ENCODE measurements at regions of chr1 and their contacts with region 1.

Region 1: DNA sequence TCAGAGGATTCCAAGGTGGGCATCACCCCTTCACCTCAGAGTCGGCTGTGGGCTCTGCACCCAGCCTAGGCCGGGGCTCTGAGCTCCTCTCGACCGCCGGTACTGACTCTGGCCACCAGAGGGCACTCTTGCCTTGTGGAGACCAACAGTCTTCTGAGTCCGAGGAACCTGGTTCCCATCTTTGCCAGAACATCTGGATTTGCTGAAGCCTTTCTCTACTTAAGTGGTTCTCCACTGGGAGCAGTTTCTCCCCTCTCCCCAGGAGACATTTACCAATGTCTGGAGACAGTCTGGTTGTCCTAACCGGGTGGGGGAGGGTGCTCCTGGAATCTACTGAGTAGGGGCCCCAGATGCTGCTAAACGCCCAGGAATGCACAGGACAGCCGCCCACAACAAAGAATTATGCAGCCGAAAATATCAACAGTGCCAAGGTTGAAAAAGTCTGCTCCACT is 9.4 kb downstream of the ETV3L start:
- DNase-seq: peak; percentile 93
- ATAC-seq: peak; percentile 92
- H3K4me3 Mint-ChIP-seq: no peak overlapping the region
- H3K27ac Mint-ChIP-seq: no peak overlapping the region
- H3K4me1 Mint-ChIP-seq: no peaks in the 10 kb centered on the region
- H3K27me3 Mint-ChIP-seq: peaks cover 5% of the 10 kb centered on the region
- CTCF ChIP-seq: peak; percentile 93

Region 2: DNA sequence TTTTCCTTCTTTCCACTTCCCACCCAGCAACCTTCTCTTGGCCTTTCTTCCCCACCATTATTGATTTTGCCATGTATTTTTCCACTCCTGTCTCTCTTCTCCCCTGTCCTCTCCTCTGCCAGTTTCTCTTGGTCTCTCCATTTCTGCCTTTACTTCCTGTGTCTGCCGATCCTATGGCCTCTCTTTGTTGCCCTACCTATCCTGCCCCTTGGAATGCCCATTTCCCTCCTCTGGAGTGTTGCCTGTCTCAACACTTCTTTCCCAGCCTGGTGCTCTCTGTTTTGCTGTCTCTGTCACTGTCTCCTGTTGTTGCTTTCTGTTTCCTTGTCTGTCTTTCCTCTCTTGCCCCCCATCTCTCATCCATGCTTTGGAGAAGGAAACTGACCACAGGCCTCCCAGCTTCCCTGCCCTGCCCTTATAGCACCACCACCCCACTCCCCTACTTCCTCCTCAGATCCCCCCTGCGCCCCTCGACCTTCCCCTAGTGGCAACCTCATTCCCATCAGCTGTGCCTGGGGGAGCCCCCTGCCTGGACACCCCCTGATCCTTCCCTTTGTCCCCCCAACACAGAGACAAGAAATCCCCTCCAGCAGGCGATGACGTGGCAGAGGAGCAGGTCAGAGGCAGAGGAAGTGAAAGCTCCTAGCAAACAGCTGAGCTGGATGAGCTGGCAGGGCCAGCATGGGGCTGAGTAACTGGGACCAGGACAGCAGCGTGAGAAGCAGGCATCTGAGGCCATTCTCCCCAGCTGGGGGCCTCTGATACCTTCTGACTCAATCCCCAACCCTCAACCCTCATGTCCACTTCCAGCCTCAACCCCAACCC is 16.0 kb after region 1 on chr1:
- CTCF ChIA-PET with region 1: interaction called, 20 read pairs
- POLR2A ChIA-PET with region 1: no interaction called
- intact Hi-C with region 1: no loop called
- DNase-seq: peak; percentile 72
- ATAC-seq: peak; percentile 93
- H3K4me3 Mint-ChIP-seq: no peak overlapping the region
- H3K27ac Mint-ChIP-seq: peak overlapping the region; percentile 2
- H3K4me1 Mint-ChIP-seq: peaks cover 9% of the 10 kb centered on the region
- H3K27me3 Mint-ChIP-seq: peaks cover 19% of the 10 kb centered on the region
- CTCF ChIP-seq: no peak

Region 3: GRCh38 chr1:157138220-157139051 is 48.2 kb after region 1 on chr1 and contains the start of gene ETV3:
- CTCF ChIA-PET with region 1: interaction called, 33 read pairs
- POLR2A ChIA-PET with region 1: no interaction called
- intact Hi-C with region 1: no loop called
- DNase-seq: peak; percentile 92
- ATAC-seq: peak; percentile 83
- H3K4me3 Mint-ChIP-seq: peak within 1 kb of the TSS; percentile 95
- H3K27ac Mint-ChIP-seq: peak within 1 kb of the TSS; percentile 90
- H3K4me1 Mint-ChIP-seq: peaks cover 65% of the 10 kb centered on the region
- H3K27me3 Mint-ChIP-seq: no peaks in the 10 kb centered on the region
- CTCF ChIP-seq: no peak
- total RNA-seq, gene ETV3: 47.7 to 47.9 TPM

Region 4: GRCh38 chr1:157163273-157164127 is 73.3 kb after region 1 on chr1:
- CTCF ChIA-PET with region 1: interaction called, 562 read pairs
- POLR2A ChIA-PET with region 1: no interaction called
- intact Hi-C with region 1: no loop called
- DNase-seq: peak; percentile 82
- ATAC-seq: peak; percentile 85
- H3K4me3 Mint-ChIP-seq: no peak overlapping the region
- H3K27ac Mint-ChIP-seq: no peak overlapping the region
- H3K4me1 Mint-ChIP-seq: no peaks in the 10 kb centered on the region
- H3K27me3 Mint-ChIP-seq: peaks cover 2% of the 10 kb centered on the region
- CTCF ChIP-seq: peak; percentile 91

Region 5: DNA sequence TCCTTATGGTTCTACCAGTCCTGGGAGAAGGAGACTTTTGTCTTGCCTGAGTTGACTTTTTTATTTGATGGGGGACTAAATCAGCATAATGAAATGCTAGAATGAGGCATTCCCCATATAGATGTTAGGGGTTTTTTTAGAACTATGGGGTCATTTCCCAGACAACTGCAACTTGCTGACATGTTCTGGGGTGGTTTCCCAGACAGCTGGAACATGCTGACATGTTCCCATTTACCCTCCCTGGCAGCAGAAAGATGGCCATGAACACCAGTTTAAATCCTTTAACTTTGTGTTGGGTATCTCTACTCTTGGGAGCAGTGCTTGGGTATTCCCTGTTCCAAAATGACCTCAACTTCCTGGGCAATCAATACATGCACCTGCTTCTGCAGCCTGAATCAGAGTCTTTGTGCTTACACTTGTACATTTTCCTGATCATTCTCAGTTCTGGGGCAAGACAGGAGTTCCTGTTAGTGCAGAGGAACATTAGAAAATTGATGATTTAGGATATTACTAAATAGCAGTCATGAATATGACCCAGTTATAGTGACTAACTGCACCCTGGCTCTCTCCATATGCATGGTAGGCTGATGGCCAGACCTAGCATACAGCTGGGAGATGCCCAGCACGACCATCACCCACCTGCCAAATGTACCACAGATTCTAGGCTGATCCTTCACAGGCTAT is 826.8 kb after region 1 on chr1:
- CTCF ChIA-PET with region 1: no interaction called
- POLR2A ChIA-PET with region 1: no interaction called
- intact Hi-C with region 1: no loop called
- DNase-seq: no peak
- ATAC-seq: no peak
- H3K4me3 Mint-ChIP-seq: no peak overlapping the region
- H3K27ac Mint-ChIP-seq: no peak overlapping the region
- H3K4me1 Mint-ChIP-seq: no peaks in the 10 kb centered on the region
- H3K27me3 Mint-ChIP-seq: peaks cover 7% of the 10 kb centered on the region
- CTCF ChIP-seq: no peak

Measured in activated CD8-positive, alpha-beta T cell treated with anti-CD3 and anti-CD28 coated beads for 36 hours (primary cell).